ENCODE measurements at regions of chr12 and their contacts with region 1.

Region 1: DNA sequence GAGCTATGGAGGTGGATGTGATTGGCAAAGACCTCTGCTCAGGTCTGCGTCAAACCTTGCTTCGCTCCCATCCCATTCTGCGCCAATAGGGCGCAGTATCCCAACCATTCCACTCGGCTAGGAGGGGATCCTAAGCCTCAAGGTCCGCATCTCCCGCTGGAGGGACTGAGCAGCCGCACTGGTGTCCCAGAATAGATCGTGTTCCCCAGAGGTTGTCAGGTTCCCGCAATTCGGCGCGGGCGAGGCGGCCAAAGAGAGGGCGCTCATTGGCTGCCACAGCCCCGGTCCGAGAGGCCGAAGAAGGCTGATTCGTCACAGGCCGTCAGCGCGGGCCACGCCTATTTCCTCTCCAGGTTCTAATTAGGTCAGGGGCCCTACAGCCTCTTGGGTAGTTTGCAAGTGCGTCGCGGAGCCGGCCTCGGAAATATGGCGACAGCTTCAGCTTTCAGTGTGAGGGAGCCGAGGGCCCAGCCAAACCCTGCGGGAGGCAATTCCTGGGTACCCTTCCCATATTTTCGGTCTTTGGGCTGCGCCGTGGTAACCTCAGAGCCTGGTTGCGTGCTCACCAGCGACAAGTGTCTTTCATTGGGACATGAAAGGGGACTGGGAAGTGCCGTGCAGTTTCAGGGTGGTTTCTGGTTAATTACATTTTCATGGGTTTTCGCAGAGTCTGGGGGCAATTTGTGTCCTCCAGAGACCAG is 5.0 kb downstream of the OR10AD1 start:
- DNase-seq: peak; percentile 90
- H3K4me3 Mint-ChIP-seq: peak overlapping the region; percentile 88
- H3K27ac Mint-ChIP-seq: peak overlapping the region; percentile 86
- H3K4me1 Mint-ChIP-seq: peaks cover 44% of the 10 kb centered on the region
- H3K27me3 Mint-ChIP-seq: peaks cover 21% of the 10 kb centered on the region

Region 2: GRCh38 chr12:48119078-48119833 is 78.9 kb before region 1 on chr12 and contains the start of gene PFKM:
- intact Hi-C with region 1: loop called (anchors 1 kb)
- DNase-seq: peak; percentile 65
- H3K4me3 Mint-ChIP-seq: peak within 1 kb of the TSS; percentile 98
- H3K27ac Mint-ChIP-seq: peak within 1 kb of the TSS; percentile 75
- H3K4me1 Mint-ChIP-seq: peaks cover 17% of the 10 kb centered on the region
- H3K27me3 Mint-ChIP-seq: peaks cover 10% of the 10 kb centered on the region
- total RNA-seq, gene PFKM: 59.7 and 68.4 TPM in 2 replicates

Region 3: GRCh38 chr12:48157018-48157888 is 40.9 kb before region 1 on chr12 and contains the start of gene ASB8:
- intact Hi-C with region 1: loop called (anchors 1 kb)
- DNase-seq: peak; percentile 98
- H3K4me3 Mint-ChIP-seq: peak within 1 kb of the TSS; percentile 94
- H3K27ac Mint-ChIP-seq: peak within 1 kb of the TSS; percentile 86
- H3K4me1 Mint-ChIP-seq: peaks cover 21% of the 10 kb centered on the region
- H3K27me3 Mint-ChIP-seq: no peaks in the 10 kb centered on the region
- total RNA-seq, gene ASB8: 33.3 and 36.1 TPM in 2 replicates

Region 4: GRCh38 chr12:48183091-48183875 is 14.8 kb before region 1 on chr12 and contains the start of gene CCDC184:
- intact Hi-C with region 1: loop called (anchors 2 kb)
- DNase-seq: peak; percentile 76
- H3K4me3 Mint-ChIP-seq: peak within 1 kb of the TSS; percentile 91
- H3K27ac Mint-ChIP-seq: peak within 1 kb of the TSS; percentile 82
- H3K4me1 Mint-ChIP-seq: peaks cover 35% of the 10 kb centered on the region
- H3K27me3 Mint-ChIP-seq: peaks cover 52% of the 10 kb centered on the region
- total RNA-seq, gene CCDC184: 0.61 and 0.75 TPM in 2 replicates

Region 5: DNA sequence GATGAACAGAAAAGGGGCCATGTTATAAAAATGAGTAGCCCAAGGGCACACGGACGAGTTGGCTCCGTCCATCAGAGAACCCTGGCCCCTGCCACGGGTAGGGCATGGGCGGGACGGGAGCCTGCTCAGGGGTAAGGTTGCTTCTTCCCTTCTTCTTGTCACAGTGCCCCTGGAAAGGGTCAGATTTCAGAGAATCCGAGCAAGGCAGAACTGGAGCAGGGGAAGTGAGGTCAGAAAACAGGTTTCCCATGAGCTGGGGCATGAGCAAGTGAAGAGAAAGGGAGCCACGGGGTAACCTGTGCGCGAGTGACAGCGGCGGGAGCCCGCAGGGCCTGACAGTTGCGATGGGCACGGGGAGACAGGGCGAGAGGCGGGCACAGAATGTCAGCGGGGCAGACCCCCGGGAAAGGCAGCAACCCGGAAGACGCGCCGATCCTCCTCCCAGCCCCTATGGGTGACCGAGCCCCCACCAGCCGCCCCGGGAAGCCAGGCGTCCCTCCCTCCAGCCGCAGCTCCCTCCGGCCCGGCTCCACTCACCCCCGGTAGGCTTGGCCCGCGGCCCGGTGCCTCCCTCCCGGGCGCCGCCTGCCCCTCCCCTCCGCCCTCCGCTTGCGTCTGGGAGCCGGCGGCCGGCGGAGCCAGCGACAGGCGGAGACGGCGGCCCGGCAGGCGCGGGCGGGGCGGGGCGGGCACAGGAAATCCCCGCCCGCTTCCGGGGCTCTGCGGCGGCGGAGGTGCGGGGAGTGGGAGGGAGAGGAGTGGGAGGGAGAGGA is 152.3 kb after region 1 on chr12 and contains the start of gene ZNF641:
- intact Hi-C with region 1: loop called (anchors 1 kb)
- DNase-seq: peak; percentile 83
- H3K4me3 Mint-ChIP-seq: peak within 1 kb of the TSS; percentile 94
- H3K27ac Mint-ChIP-seq: peak within 1 kb of the TSS; percentile 94
- H3K4me1 Mint-ChIP-seq: peaks cover 27% of the 10 kb centered on the region
- H3K27me3 Mint-ChIP-seq: peaks cover 13% of the 10 kb centered on the region
- total RNA-seq, gene ZNF641: 7.0 and 7.1 TPM in 2 replicates

Region 6: GRCh38 chr12:48681738-48682532 is 483.8 kb after region 1 on chr12 and contains the start of gene KANSL2:
- intact Hi-C with region 1: loop called (anchors 1 kb)
- DNase-seq: peak; percentile 97
- H3K4me3 Mint-ChIP-seq: peak within 1 kb of the TSS; percentile 99
- H3K27ac Mint-ChIP-seq: peak within 1 kb of the TSS; percentile 96
- H3K4me1 Mint-ChIP-seq: peaks cover 44% of the 10 kb centered on the region
- H3K27me3 Mint-ChIP-seq: no peaks in the 10 kb centered on the region
- total RNA-seq, gene KANSL2: 65.3 and 66.4 TPM in 2 replicates